Motor neuron (in vitro differentiated cells): ENCODE measurements at regions of chr7 and their contacts with region 1.

Region 1: DNA sequence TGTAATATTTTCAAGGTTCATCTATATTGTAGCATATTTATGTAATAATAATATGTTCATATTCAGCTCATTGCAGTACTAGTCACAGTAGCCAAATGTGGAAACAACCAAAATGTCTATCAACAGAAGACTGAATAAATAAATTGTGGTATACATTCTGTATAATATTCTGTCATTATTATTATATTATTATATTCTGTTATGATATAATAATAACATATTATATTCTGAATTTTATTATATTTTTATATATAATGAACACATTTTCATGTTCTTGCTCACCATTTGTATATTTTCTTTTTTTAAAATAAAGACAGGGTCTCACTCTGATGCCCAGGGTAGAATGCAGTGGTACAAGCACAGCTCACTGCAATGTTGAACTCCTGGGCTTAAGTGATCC is 91.2 kb upstream of the STARD3NL start:
- ATAC-seq: no peak
- H3K4me3 ChIP-seq: no peak overlapping the region
- H3K27ac ChIP-seq: no peak overlapping the region
- H3K4me1 ChIP-seq: no peaks in the 10 kb centered on the region

Region 2: GRCh38 chr7:37908221-37908788 is 178.6 kb before region 1 on chr7:
- in situ Hi-C with region 1: no loop called
- ATAC-seq: no peak
- H3K4me3 ChIP-seq: no peak overlapping the region
- H3K27ac ChIP-seq: no peak overlapping the region
- H3K4me1 ChIP-seq: no peaks in the 10 kb centered on the region

Region 3: DNA sequence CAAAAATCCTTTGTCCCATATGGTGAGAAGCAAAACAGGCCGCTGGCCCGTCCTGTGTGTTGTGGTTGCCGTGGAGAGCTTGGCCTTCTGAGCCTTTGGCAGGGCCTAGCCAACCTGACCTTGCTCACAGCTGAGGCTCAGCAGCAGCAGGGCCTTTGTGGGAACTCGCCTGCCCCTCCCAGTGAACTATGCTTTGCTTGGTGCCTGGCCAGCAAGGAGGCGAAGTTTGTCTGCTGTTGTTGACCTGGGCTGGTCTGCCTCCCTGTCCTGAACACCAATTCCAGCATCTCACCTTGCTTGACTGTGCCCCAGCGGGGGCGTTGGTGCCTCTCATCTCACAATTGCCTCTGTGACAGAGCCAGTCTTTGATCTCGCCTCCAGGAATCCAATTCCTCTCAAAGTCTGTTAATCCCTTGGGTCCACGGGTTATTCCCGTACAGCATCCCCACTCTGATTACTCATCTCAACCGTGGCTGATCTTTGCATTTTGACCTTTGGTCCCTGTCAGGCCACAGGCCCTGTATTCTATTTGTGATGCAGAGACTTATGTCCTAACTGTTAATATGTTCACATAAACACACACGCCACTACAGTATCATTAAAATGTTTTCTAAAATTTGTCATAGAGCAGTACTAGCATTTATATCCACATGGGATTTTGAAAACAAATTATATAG is 143.8 kb before region 1 on chr7:
- in situ Hi-C with region 1: loop called in 1 of 9 experiments (anchors 25 kb)
- ATAC-seq: peak in 7 of 8 experiments; percentile 61 to 92 (median 75)
- H3K4me3 ChIP-seq: no peak overlapping the region
- H3K27ac ChIP-seq: peak overlapping the region in 1 of 2 donors; percentile 25
- H3K4me1 ChIP-seq: peaks cover 17 to 26% of the 10 kb centered on the region in 2 donors